OCI-LY7 (cell line): ENCODE measurements at regions of chr15 and their contacts with region 1.

Region 1: GRCh38 chr15:33737687-33738601 is 230.4 kb upstream of the CHRM5 start:
- DNase-seq: peak; percentile 49
- H3K4me3 ChIP-seq: no peak overlapping the region
- H3K27ac ChIP-seq: no peak overlapping the region
- H3K4me1 ChIP-seq: no peaks in the 10 kb centered on the region
- CTCF ChIP-seq: peak; percentile 93

Region 2: GRCh38 chr15:33910741-33911140 is 172.8 kb after region 1 on chr15:
- CTCF ChIA-PET with region 1: interaction called, 17 read pairs
- POLR2A ChIA-PET with region 1: no interaction called
- intact Hi-C with region 1: no loop called
- DNase-seq: no peak
- H3K4me3 ChIP-seq: no peak overlapping the region
- H3K27ac ChIP-seq: no peak overlapping the region
- H3K4me1 ChIP-seq: no peaks in the 10 kb centered on the region
- CTCF ChIP-seq: no peak

Region 3: GRCh38 chr15:33963831-33964664 is 226.1 kb after region 1 on chr15:
- CTCF ChIA-PET with region 1: no interaction called
- POLR2A ChIA-PET with region 1: interaction called, 5 read pairs
- intact Hi-C with region 1: loop called (anchors 1 kb)
- DNase-seq: peak; percentile 45
- H3K4me3 ChIP-seq: no peak overlapping the region
- H3K27ac ChIP-seq: no peak overlapping the region
- H3K4me1 ChIP-seq: no peaks in the 10 kb centered on the region
- CTCF ChIP-seq: peak; percentile 95

Region 4: DNA sequence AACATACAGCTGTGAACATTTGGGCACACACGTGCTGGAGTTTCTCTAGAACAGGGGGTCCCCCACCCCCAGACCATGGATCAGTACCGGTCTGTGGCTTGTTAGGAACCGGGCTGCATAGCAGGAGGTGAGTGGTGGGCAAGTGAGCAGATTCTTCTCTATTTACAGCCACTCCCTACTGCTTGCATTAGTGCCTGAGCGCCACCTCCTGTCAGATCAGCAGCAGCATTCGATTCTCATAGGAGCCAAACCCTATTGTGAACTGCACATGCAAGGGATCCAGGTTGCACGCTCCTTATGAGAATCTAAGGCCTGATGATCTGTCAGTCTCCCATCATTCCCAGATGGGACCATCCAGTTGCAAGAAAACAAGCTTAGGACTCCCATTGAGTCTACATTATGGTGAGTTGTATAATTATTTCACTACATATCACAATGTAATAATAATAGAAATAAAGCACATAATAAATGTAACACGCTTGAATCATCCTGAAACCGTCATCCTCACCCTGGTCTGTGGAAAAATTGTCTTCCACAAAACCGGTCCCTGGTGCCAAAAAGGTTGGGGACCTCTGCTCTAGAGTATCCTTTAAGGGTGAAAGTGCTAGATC is 256.2 kb after region 1 on chr15:
- CTCF ChIA-PET with region 1: interaction called, 3 read pairs
- POLR2A ChIA-PET with region 1: no interaction called
- intact Hi-C with region 1: loop called (anchors 10 kb)
- DNase-seq: peak; percentile 39
- H3K4me3 ChIP-seq: no peak overlapping the region
- H3K27ac ChIP-seq: no peak overlapping the region
- H3K4me1 ChIP-seq: no peaks in the 10 kb centered on the region
- CTCF ChIP-seq: peak; percentile 73